CD4-positive, alpha-beta T cell (primary cell): ENCODE measurements at regions of chr11 and their contacts with region 1.

Region 1: DNA sequence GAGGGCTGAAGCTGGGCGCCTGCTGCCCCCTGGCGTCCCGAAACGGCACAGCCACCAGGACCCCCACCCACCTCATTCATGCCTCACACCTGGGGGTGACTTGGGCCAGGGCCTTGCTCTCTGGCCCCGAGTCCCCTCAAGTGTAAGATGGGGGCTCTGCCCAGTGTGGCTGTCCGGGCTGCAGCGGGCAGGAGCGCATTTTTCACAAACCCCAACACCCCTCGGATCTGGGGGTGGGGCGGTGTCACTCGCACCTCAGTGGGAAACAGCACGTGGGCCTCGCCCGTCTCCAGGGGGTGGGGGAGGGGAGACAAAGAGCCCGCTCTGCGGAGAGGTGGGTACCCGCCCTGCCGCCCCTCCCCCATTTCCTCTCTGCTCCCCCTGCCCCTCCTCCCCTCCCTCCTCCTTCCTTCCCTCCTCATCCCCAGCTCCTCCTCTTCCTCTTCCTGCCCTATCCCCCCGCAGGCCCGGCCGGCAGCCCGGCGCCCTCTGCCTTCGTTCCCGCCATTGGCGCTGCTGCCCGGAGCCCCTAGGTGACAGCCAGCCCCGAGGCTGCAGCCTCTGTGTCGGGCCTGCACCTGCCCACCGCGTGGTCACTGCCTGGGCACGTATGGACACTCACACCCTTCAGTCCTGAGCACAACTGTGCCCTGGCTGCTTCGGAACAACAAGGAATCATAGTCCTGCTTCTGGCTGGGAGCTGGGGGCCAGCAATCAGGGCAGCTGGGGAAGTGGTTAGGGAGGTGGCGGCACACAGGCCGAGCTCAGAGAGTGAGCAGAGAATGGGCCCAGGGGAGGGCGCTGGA is 6.8 kb upstream of the CDKN1C start:
- DNase-seq: peak; percentile 42 to 84 (median 64)
- ATAC-seq: peak; percentile 69
- H3K4me3 ChIP-seq: peak overlapping the region; percentile 49
- H3K4me3 Mint-ChIP-seq: peak overlapping the region; percentile 82
- H3K27ac ChIP-seq: peak overlapping the region; percentile 53 to 68
- H3K27ac Mint-ChIP-seq: peak overlapping the region; percentile 68
- H3K4me1 ChIP-seq: peaks cover 47% of the 10 kb centered on the region
- H3K4me1 Mint-ChIP-seq: peaks cover 29% of the 10 kb centered on the region
- H3K27me3 ChIP-seq: no peaks in the 10 kb centered on the region
- H3K27me3 Mint-ChIP-seq: no peaks in the 10 kb centered on the region
- CTCF ChIP-seq: peak; percentile 86

Region 2: DNA sequence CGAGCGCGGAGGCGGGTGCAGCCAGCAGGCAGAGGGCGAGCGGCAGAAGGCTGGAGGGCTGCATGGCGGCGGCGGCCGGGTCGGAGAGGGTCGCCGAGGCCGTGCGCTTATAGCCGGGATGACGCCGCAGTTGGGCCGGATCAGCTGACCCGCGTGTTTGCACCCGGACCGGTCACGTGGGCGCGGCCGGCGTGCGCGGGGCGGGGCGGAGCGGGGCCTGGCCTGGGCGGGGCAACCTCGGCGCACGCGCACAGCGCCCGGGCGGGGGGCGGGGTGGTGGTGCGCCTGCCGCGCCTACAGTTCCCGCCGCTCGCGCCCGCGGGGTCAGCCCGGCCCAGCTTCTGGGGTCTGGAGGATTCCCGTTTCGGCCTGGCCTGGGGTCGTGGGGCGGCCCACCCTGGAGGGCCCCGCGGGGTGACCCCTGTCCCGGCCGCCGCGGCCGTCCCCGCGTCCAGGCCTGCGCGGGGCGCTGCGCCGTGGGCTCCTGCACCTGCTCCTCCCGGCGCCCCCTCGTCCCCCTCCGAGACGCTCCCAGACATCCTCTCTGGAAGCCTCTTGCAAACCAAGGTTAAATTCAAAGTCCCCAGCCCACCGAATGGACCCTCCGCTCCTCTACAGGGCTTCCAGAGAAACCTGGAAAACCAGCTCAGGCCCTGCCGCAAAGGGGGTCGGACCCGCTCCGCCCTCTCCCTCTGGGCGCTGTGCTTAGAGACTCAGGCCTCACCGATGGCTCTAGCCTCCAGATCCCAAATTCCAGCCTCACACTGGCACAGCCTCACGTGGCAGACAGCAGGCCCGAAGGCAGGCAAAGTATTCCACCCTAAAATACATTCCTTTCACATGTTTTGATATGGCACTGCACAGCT is 1128.4 kb before region 1 on chr11 and contains the start of gene CTSD:
- CTCF ChIA-PET with region 1: no interaction called
- POLR2A ChIA-PET with region 1: no interaction called
- intact Hi-C with region 1: loop called in 1 of 2 experiments (anchors 10 kb)
- DNase-seq: peak; percentile 66 to 92 (median 86)
- ATAC-seq: peak; percentile 86
- H3K4me3 ChIP-seq: peak within 1 kb of the TSS; percentile 72
- H3K4me3 Mint-ChIP-seq: peak within 1 kb of the TSS; percentile 95
- H3K27ac ChIP-seq: peak within 1 kb of the TSS; percentile 55 to 65
- H3K27ac Mint-ChIP-seq: peak within 1 kb of the TSS; percentile 81
- H3K4me1 ChIP-seq: peaks cover 54% of the 10 kb centered on the region
- H3K4me1 Mint-ChIP-seq: peaks cover 29% of the 10 kb centered on the region
- H3K27me3 ChIP-seq: peaks cover 0 to 2% of the 10 kb centered on the region in 2 experiments
- H3K27me3 Mint-ChIP-seq: no peaks in the 10 kb centered on the region
- CTCF ChIP-seq: no peak
- total RNA-seq, gene CTSD: 63.3 to 71.3 TPM

Region 3: GRCh38 chr11:2196970-2197770 is 695.2 kb before region 1 on chr11:
- CTCF ChIA-PET with region 1: no interaction called
- POLR2A ChIA-PET with region 1: no interaction called
- intact Hi-C with region 1: loop called in 1 of 2 experiments (anchors 10 kb)
- DNase-seq: peak; percentile 53 to 84 (median 62)
- ATAC-seq: peak; percentile 90
- H3K4me3 ChIP-seq: no peak overlapping the region
- H3K4me3 Mint-ChIP-seq: no peak overlapping the region
- H3K27ac ChIP-seq: no peak overlapping the region
- H3K27ac Mint-ChIP-seq: no peak overlapping the region
- H3K4me1 ChIP-seq: peaks cover 14% of the 10 kb centered on the region
- H3K4me1 Mint-ChIP-seq: peaks cover 13% of the 10 kb centered on the region
- H3K27me3 ChIP-seq: no peaks in the 10 kb centered on the region
- H3K27me3 Mint-ChIP-seq: no peaks in the 10 kb centered on the region
- CTCF ChIP-seq: peak; percentile 63

Region 4: GRCh38 chr11:2428322-2428795 is 464.1 kb before region 1 on chr11:
- CTCF ChIA-PET with region 1: no interaction called
- POLR2A ChIA-PET with region 1: interaction called, 5 read pairs
- intact Hi-C with region 1: loop called (anchors 1 to 2 kb)
- DNase-seq: peak; percentile 80 to 94 (median 88)
- ATAC-seq: peak; percentile 97
- H3K4me3 ChIP-seq: no peak overlapping the region
- H3K4me3 Mint-ChIP-seq: no peak overlapping the region
- H3K27ac ChIP-seq: no peak overlapping the region
- H3K27ac Mint-ChIP-seq: no peak overlapping the region
- H3K4me1 ChIP-seq: peaks cover 3% of the 10 kb centered on the region
- H3K4me1 Mint-ChIP-seq: no peaks in the 10 kb centered on the region
- H3K27me3 ChIP-seq: no peaks in the 10 kb centered on the region
- H3K27me3 Mint-ChIP-seq: no peaks in the 10 kb centered on the region
- CTCF ChIP-seq: peak; percentile 86

Region 5: DNA sequence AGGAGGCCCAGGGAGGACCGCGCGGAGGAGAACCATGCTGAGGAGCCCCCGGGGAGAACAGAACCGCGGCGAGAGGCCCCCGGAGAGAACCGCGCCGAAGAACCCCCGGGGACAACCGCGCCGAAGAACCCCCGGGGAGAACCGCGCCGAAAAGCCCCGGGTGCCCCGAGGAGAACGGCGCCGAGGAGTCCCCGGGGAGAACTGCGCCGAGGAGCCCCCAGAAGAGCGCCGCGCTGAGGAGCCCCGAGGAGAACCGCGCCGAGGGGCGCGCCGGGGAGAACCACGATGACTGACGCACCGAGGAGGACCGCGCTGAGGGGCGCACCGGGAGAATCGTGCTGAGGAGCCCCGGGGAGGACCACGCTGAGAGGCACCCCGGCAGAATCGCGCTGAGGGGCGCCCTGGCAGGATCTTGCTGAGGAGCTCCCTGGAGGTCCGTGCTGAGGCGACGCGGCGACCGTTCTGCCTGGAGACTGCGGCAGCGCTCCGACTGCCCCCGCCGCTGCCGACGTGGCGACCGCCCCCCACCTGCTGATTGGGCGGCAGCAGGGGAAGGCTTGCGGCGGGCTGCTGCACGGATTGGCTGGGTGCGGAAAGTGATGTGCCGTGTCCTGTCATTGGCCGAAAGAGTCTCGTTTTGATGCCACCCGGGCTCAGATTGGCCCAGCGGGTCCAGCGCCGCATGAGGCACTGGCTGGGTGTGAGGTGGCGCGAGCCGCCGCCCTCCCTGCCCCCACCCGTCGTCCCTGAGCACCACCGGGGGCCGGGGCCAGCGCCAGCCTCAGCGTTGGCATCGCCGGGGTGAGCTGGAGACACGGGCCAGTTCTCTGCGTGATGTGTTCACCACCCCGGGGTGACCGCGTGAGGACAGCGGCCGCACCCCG is 192.6 kb before region 1 on chr11 and contains the start of gene KCNQ1OT1:
- CTCF ChIA-PET with region 1: no interaction called
- POLR2A ChIA-PET with region 1: no interaction called
- intact Hi-C with region 1: loop called in 1 of 2 experiments (anchors 5 kb)
- DNase-seq: peak; percentile 73 to 95 (median 82)
- ATAC-seq: peak; percentile 97
- H3K4me3 ChIP-seq: peak within 1 kb of the TSS; percentile 66
- H3K4me3 Mint-ChIP-seq: peak within 1 kb of the TSS; percentile 80
- H3K27ac ChIP-seq: no peak within 1 kb of the TSS
- H3K27ac Mint-ChIP-seq: peak within 1 kb of the TSS; percentile 33
- H3K4me1 ChIP-seq: peaks cover 18% of the 10 kb centered on the region
- H3K4me1 Mint-ChIP-seq: peaks cover 7% of the 10 kb centered on the region
- H3K27me3 ChIP-seq: no peaks in the 10 kb centered on the region
- H3K27me3 Mint-ChIP-seq: no peaks in the 10 kb centered on the region
- CTCF ChIP-seq: no peak
- total RNA-seq, gene KCNQ1OT1: 0.17 to 0.22 TPM